IMR-90 (cell line): ENCODE measurements at regions of chr7 and their contacts with region 1.

Region 1: DNA sequence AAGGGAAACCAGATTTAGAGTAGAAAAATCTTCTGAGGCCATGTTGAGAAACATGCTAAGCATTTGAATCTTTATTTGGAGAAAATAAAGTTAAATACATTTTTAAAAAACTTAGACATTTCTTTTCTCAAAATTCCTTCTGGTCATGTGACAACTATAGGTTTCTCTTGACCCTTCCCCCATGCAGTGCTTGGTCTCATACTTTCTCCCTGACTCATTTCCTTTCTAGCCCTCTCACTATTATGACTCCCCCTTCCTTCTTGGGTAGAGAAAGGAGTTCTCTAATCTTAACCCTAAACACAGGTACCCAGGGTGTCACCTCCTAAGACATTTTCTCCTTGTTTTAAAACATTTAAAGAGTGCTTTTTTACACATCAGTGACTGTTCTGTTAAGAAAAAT is 179.5 kb upstream of the TMEM106B start:
- DNase-seq: peak; percentile 64
- ATAC-seq: peak; percentile 50; the same call in 1 of the 2 replicates
- H3K4me3 ChIP-seq: no peak overlapping the region
- H3K27ac ChIP-seq: no peak overlapping the region
- H3K4me1 ChIP-seq: 0 out of 2 replicates have a peak, but pooled peaks cover 3% of the 10 kb centered on the region
- H3K27me3 ChIP-seq: no peaks in the 10 kb centered on the region
- CTCF ChIP-seq: no peak
- POLR2A ChIP-seq: no peak
- RAD21 ChIP-seq: no peak

Region 2: GRCh38 chr7:10401793-10402192 is 1629.8 kb before region 1 on chr7:
- CTCF ChIA-PET with region 1: no interaction called
- POLR2A ChIA-PET with region 1: no interaction called
- dilution Hi-C with region 1: no loop called
- in situ Hi-C with region 1: no loop called
- intact Hi-C with region 1: no loop called
- DNase-seq: no peak
- ATAC-seq: no peak
- H3K4me3 ChIP-seq: no peak overlapping the region
- H3K27ac ChIP-seq: no peak overlapping the region
- H3K4me1 ChIP-seq: no peaks in the 10 kb centered on the region
- H3K27me3 ChIP-seq: no peaks in the 10 kb centered on the region
- CTCF ChIP-seq: no peak
- POLR2A ChIP-seq: no peak
- RAD21 ChIP-seq: no peak

Region 3: DNA sequence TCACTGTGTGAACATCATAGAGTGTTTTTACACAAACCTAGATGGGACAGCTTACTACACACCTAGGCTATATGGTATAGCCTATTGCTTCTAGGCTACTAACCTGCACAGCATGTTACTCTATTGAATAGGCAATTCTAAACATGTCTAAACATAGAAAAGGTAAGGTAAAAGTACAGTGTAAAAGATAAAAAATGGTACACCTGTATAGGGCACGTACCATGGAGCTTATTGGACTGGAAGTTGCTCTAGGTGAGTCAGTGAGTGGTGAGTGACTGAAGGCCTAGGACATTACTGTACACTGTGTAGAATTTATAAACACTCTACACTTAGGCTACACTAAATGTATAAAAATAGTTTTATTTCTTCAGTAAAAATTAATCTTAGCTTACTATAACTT is 17.7 kb before region 1 on chr7:
- CTCF ChIA-PET with region 1: no interaction called
- POLR2A ChIA-PET with region 1: no interaction called
- dilution Hi-C with region 1: no loop called
- in situ Hi-C with region 1: no loop called
- intact Hi-C with region 1: loop called (anchors 2 kb)
- DNase-seq: no peak
- ATAC-seq: no peak
- H3K4me3 ChIP-seq: no peak overlapping the region
- H3K27ac ChIP-seq: no peak overlapping the region
- H3K4me1 ChIP-seq: no peaks in the 10 kb centered on the region
- H3K27me3 ChIP-seq: no peaks in the 10 kb centered on the region
- CTCF ChIP-seq: no peak
- POLR2A ChIP-seq: no peak
- RAD21 ChIP-seq: no peak

Region 4: DNA sequence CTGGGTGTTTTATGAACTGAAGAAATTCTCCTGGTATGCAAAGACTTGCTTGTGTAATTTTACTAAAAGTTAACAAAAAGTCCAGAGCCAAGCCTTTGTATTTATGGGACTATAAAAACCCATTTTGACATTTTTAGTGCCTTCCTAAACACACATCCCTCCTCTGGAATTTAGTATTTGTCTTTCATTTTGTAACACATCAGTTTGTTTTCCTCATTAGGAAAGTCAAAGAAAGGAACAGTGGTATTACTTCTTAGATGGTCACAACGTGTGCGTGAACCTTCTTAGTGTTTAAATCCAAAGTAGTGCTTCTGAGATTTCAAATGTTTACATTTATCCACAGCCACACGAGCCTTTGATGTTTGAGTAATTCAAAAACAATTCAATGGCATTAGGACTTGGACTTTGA is 76.2 kb after region 1 on chr7:
- CTCF ChIA-PET with region 1: no interaction called
- POLR2A ChIA-PET with region 1: no interaction called
- dilution Hi-C with region 1: no loop called
- in situ Hi-C with region 1: no loop called
- intact Hi-C with region 1: loop called (anchors 10 kb)
- DNase-seq: no peak
- ATAC-seq: no peak
- H3K4me3 ChIP-seq: no peak overlapping the region
- H3K27ac ChIP-seq: no peak overlapping the region
- H3K4me1 ChIP-seq: no peaks in the 10 kb centered on the region
- H3K27me3 ChIP-seq: no peaks in the 10 kb centered on the region; the same call in 1 of the 2 replicates
- CTCF ChIP-seq: no peak
- POLR2A ChIP-seq: no peak
- RAD21 ChIP-seq: no peak

Region 5: GRCh38 chr7:12119620-12120303 is 88.1 kb after region 1 on chr7:
- CTCF ChIA-PET with region 1: no interaction called
- POLR2A ChIA-PET with region 1: no interaction called
- dilution Hi-C with region 1: no loop called
- in situ Hi-C with region 1: no loop called
- intact Hi-C with region 1: no loop called
- DNase-seq: no peak
- ATAC-seq: no peak
- H3K4me3 ChIP-seq: no peak overlapping the region
- H3K27ac ChIP-seq: no peak overlapping the region
- H3K4me1 ChIP-seq: no peaks in the 10 kb centered on the region
- H3K27me3 ChIP-seq: no peaks in the 10 kb centered on the region
- CTCF ChIP-seq: no peak
- POLR2A ChIP-seq: no peak
- RAD21 ChIP-seq: no peak